ENCODE measurements at regions of chr2 and their contacts with region 1.

Region 1: GRCh38 chr2:231104115-231104713 is 20.6 kb downstream of the HTR2B start:
- DNase-seq: peak; percentile 86
- H3K4me3 ChIP-seq: no peak overlapping the region
- H3K27ac ChIP-seq: no peak overlapping the region
- H3K4me1 ChIP-seq: peaks cover 10% of the 10 kb centered on the region
- H3K27me3 ChIP-seq: no peaks in the 10 kb centered on the region
- CTCF ChIP-seq: peak; percentile 61 to 70
- POLR2A ChIP-seq: no peak

Region 2: GRCh38 chr2:231191896-231192872 is 88.0 kb after region 1 on chr2:
- CTCF ChIA-PET with region 1: interaction called, 226 read pairs
- POLR2A ChIA-PET with region 1: no interaction called
- dilution Hi-C with region 1: no loop called
- intact Hi-C with region 1: loop called (anchors 1 kb)
- DNase-seq: peak; percentile 77
- H3K4me3 ChIP-seq: no peak overlapping the region
- H3K27ac ChIP-seq: peak overlapping the region; percentile 47
- H3K4me1 ChIP-seq: peaks cover 24% of the 10 kb centered on the region
- H3K27me3 ChIP-seq: no peaks in the 10 kb centered on the region
- CTCF ChIP-seq: peak; percentile 79 to 88
- POLR2A ChIP-seq: no peak

Region 3: GRCh38 chr2:231227309-231228162 is 123.3 kb after region 1 on chr2:
- CTCF ChIA-PET with region 1: interaction called, 67 read pairs
- POLR2A ChIA-PET with region 1: no interaction called
- dilution Hi-C with region 1: no loop called
- intact Hi-C with region 1: loop called (anchors 1 kb)
- DNase-seq: peak; percentile 68
- H3K4me3 ChIP-seq: no peak overlapping the region
- H3K27ac ChIP-seq: no peak overlapping the region
- H3K4me1 ChIP-seq: no peaks in the 10 kb centered on the region
- H3K27me3 ChIP-seq: no peaks in the 10 kb centered on the region
- CTCF ChIP-seq: peak; percentile 80 to 92
- POLR2A ChIP-seq: no peak

Region 4: GRCh38 chr2:231399853-231400680 is 295.9 kb after region 1 on chr2:
- CTCF ChIA-PET with region 1: interaction called, 14 read pairs
- POLR2A ChIA-PET with region 1: no interaction called
- dilution Hi-C with region 1: no loop called
- intact Hi-C with region 1: no loop called
- DNase-seq: peak; percentile 26
- H3K4me3 ChIP-seq: no peak overlapping the region
- H3K27ac ChIP-seq: no peak overlapping the region
- H3K4me1 ChIP-seq: no peaks in the 10 kb centered on the region
- H3K27me3 ChIP-seq: peaks cover 0 to 3% of the 10 kb centered on the region in 2 experiments
- CTCF ChIP-seq: peak in 1 of 2 donors; percentile 5
- POLR2A ChIP-seq: no peak

Region 5: GRCh38 chr2:231463698-231464575 is 359.7 kb after region 1 on chr2 and contains the start of gene NCL:
- CTCF ChIA-PET with region 1: no interaction called
- POLR2A ChIA-PET with region 1: interaction called, 3 read pairs
- dilution Hi-C with region 1: loop called (anchors 25 kb)
- intact Hi-C with region 1: no loop called
- DNase-seq: peak; percentile 99
- H3K4me3 ChIP-seq: peak within 1 kb of the TSS; percentile 93 to 99 (median 96)
- H3K27ac ChIP-seq: peak within 1 kb of the TSS; percentile 79
- H3K4me1 ChIP-seq: peaks cover 20% of the 10 kb centered on the region
- H3K27me3 ChIP-seq: no peaks in the 10 kb centered on the region
- CTCF ChIP-seq: no peak
- POLR2A ChIP-seq: peak; percentile 99
- total RNA-seq, gene NCL: 701 and 708 TPM in 2 replicates

Measured in endothelial cell of umbilical vein (primary cell).